ENCODE measurements at regions of chr11 and their contacts with region 1.

Region 1: DNA sequence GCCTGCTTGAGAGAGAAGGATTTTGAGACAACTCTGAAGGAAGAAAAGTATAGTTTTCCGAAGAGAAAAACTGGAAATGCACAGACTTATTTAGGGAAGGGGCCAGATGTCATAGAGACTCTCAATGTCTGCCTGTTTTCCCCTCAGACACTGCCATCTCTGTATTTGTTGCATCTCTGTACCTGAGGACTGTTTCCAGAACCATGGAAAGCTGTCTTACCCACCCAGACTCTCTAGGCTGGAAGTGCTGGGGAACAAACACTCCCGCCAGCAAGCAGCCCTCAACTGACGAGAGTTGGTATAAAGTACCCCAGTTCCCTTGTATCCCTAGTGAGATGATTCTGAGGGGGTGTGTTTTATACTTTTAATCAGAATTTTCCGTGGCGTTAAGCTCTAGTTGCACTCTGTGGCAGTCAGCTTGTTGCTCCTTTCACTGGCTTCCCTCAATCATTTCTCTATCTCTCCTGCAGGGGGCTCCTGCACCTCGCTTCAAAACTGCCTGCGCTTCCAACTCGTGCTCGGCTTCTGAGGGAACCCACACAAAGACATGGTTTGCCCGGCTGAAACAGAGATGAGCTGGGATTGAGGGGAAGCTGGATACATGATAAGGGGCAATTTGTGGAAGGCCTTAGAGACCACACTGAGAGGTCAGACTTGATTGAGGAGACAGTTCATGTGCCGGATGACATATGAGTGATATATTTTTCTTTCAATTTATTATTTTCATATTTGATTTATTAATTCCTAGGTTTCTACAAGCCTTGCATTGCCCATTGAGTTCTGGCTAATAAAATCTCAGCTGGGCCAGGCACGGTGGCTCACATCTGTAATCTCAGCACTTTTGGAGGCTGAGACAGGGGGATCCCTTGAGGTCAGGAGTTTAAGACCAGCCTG is 36.9 kb upstream of the CLPB start:
- DNase-seq: peak; percentile 70
- H3K4me3 Mint-ChIP-seq: peak overlapping the region; percentile 25
- H3K27ac Mint-ChIP-seq: no peak overlapping the region
- H3K4me1 Mint-ChIP-seq: peaks cover 2% of the 10 kb centered on the region
- H3K27me3 Mint-ChIP-seq: peaks cover 16% of the 10 kb centered on the region

Region 2: DNA sequence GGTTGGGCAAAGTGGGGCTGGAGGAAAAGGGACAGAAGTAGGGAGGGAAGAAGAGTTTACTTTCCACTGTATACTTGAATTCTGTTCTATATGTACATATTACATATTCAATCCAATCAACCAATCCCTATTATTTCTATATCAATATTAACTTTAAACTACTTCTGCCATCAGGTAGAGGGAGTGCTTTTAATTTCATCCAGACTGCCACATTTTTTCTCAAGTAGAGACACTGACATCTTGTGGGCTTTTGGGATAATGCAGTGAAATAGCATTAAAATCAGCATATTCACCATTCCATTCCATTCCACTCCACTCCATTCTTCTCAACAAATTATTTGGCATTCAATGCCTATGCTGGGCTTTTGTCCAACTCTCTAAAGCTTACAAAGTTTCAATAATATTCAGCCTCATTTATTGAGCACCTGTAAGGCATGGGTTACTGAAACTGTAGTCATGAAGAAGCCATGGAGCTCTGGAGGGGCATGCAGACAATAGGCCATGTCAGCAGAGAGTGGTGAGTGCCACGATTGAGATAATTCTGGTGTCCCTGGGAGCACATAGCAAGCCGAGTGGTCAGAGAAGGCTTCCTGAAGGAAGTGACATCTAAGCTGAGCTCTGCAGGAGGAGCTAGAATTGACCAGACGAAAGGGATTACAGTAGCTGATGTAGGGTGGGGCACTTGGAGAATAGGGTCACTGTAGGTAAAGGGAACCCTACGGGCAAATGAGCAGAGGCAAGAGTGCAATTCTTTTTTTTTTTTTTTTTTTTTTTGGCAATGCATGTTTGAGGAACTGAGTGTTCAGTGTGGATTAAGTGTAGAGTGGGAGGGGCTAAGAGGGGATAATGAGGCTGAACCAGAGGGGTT is 24.1 kb before region 1 on chr11:
- CTCF ChIA-PET with region 1: interaction called, 27 read pairs
- POLR2A ChIA-PET with region 1: no interaction called
- intact Hi-C with region 1: no loop called
- DNase-seq: no peak
- H3K4me3 Mint-ChIP-seq: no peak overlapping the region
- H3K27ac Mint-ChIP-seq: no peak overlapping the region
- H3K4me1 Mint-ChIP-seq: no peaks in the 10 kb centered on the region
- H3K27me3 Mint-ChIP-seq: peaks cover 8% of the 10 kb centered on the region

Region 3: GRCh38 chr11:72483412-72484186 is 12.3 kb after region 1 on chr11:
- CTCF ChIA-PET with region 1: interaction called, 20 read pairs
- POLR2A ChIA-PET with region 1: no interaction called
- intact Hi-C with region 1: no loop called
- DNase-seq: peak; percentile 25
- H3K4me3 Mint-ChIP-seq: no peak overlapping the region
- H3K27ac Mint-ChIP-seq: peak overlapping the region; percentile 6
- H3K4me1 Mint-ChIP-seq: peaks cover 9% of the 10 kb centered on the region
- H3K27me3 Mint-ChIP-seq: no peaks in the 10 kb centered on the region

Region 4: DNA sequence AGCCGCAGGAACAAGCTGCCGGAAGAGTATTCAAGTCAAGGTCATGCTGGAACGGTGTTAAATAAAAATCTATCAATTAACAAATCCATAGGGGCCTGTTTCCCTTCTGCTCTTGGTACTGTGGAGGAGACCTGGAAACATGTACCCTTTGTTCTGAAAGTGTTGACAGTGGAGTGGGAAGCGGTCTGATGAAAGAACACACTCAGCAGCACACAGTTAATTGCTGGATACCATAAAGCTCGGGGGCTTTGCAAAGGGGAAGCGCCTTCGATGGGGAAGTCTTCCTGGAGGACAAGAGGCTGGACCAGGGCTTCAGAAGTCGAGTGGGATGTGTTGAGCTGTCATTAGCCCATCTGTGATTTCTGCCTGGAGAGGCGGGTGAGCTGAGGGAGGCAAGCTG is 75.6 kb after region 1 on chr11:
- CTCF ChIA-PET with region 1: interaction called, 69 read pairs
- POLR2A ChIA-PET with region 1: no interaction called
- intact Hi-C with region 1: no loop called
- DNase-seq: no peak
- H3K4me3 Mint-ChIP-seq: no peak overlapping the region
- H3K27ac Mint-ChIP-seq: no peak overlapping the region
- H3K4me1 Mint-ChIP-seq: no peaks in the 10 kb centered on the region
- H3K27me3 Mint-ChIP-seq: no peaks in the 10 kb centered on the region

Region 5: GRCh38 chr11:72561856-72562255 is 90.6 kb after region 1 on chr11:
- CTCF ChIA-PET with region 1: interaction called, 13 read pairs
- POLR2A ChIA-PET with region 1: no interaction called
- intact Hi-C with region 1: no loop called
- DNase-seq: no peak
- H3K4me3 Mint-ChIP-seq: no peak overlapping the region
- H3K27ac Mint-ChIP-seq: no peak overlapping the region
- H3K4me1 Mint-ChIP-seq: no peaks in the 10 kb centered on the region
- H3K27me3 Mint-ChIP-seq: no peaks in the 10 kb centered on the region

Region 6: GRCh38 chr11:72585762-72586311 is 114.6 kb after region 1 on chr11:
- CTCF ChIA-PET with region 1: interaction called, 34 read pairs
- POLR2A ChIA-PET with region 1: no interaction called
- intact Hi-C with region 1: no loop called
- DNase-seq: peak; percentile 76
- H3K4me3 Mint-ChIP-seq: peak overlapping the region; percentile 45
- H3K27ac Mint-ChIP-seq: no peak overlapping the region
- H3K4me1 Mint-ChIP-seq: peaks cover 26% of the 10 kb centered on the region
- H3K27me3 Mint-ChIP-seq: peaks cover 30% of the 10 kb centered on the region

Region 7: GRCh38 chr11:72683782-72684200 is 212.5 kb after region 1 on chr11:
- CTCF ChIA-PET with region 1: interaction called, 21 read pairs
- POLR2A ChIA-PET with region 1: no interaction called
- intact Hi-C with region 1: no loop called
- DNase-seq: peak; percentile 79
- H3K4me3 Mint-ChIP-seq: no peak overlapping the region
- H3K27ac Mint-ChIP-seq: no peak overlapping the region
- H3K4me1 Mint-ChIP-seq: peaks cover 17% of the 10 kb centered on the region
- H3K27me3 Mint-ChIP-seq: peaks cover 4% of the 10 kb centered on the region